GM12878 (cell line): ENCODE measurements at regions of chr3 and their contacts with region 1.

Region 1: GRCh38 chr3:152595975-152596790 is 238.7 kb upstream of the P2RY1 start:
- DNase-seq: peak; percentile 88
- ATAC-seq: peak; percentile 99
- H3K4me3 ChIP-seq: no peak overlapping the region
- H3K27ac ChIP-seq: peak overlapping the region; percentile 16
- H3K4me1 ChIP-seq: peaks cover 7% of the 10 kb centered on the region
- H3K27me3 ChIP-seq: no peaks in the 10 kb centered on the region
- CTCF ChIP-seq: no peak
- EP300 ChIP-seq: no peak; a peak in 2 of 4 replicates
- POLR2A ChIP-seq: no peak
- RAD21 ChIP-seq: no peak

Region 2: GRCh38 chr3:151816091-151816604 is 780.0 kb before region 1 on chr3:
- CTCF ChIA-PET with region 1: no interaction called
- POLR2A ChIA-PET with region 1: no interaction called
- RAD21 ChIA-PET with region 1: no interaction called
- SMC1A ChIA-PET with region 1: no interaction called
- in situ Hi-C with region 1: no loop called
- intact Hi-C with region 1: no loop called
- DNase-seq: no peak
- ATAC-seq: no peak
- H3K4me3 ChIP-seq: no peak overlapping the region
- H3K27ac ChIP-seq: no peak overlapping the region
- H3K4me1 ChIP-seq: no peaks in the 10 kb centered on the region
- H3K27me3 ChIP-seq: no peaks in the 10 kb centered on the region; a peak in 1 of 4 replicates
- CTCF ChIP-seq: no peak
- EP300 ChIP-seq: no peak
- POLR2A ChIP-seq: no peak
- RAD21 ChIP-seq: no peak

Region 3: DNA sequence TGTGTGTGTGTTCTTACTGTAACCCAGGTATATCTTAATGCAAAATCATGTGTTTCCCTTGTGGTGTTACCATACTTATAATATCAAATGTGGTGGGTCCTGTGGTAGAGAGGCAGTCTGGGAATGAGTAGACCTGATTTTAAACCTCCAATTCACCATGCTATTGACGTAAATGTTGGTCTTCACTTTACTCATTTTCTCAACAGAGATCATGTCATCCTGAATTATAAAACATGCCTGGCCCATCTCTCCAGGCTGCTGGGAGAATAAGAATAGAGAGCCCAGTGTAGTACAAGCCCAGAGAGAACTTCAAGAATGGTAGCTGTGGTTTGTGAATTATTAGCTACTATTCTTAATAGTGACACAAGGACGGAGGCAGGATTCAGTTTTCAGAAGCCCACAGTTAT is 239.3 kb before region 1 on chr3:
- CTCF ChIA-PET with region 1: no interaction called
- POLR2A ChIA-PET with region 1: no interaction called
- RAD21 ChIA-PET with region 1: no interaction called
- SMC1A ChIA-PET with region 1: no interaction called
- in situ Hi-C with region 1: no loop called
- intact Hi-C with region 1: no loop called
- DNase-seq: peak; percentile 61
- ATAC-seq: peak; percentile 89
- H3K4me3 ChIP-seq: no peak overlapping the region
- H3K27ac ChIP-seq: peak overlapping the region; percentile 48
- H3K4me1 ChIP-seq: peaks cover 14% of the 10 kb centered on the region
- H3K27me3 ChIP-seq: no peaks in the 10 kb centered on the region
- CTCF ChIP-seq: no peak
- EP300 ChIP-seq: peak; percentile 90
- POLR2A ChIP-seq: no peak
- RAD21 ChIP-seq: no peak

Region 4: DNA sequence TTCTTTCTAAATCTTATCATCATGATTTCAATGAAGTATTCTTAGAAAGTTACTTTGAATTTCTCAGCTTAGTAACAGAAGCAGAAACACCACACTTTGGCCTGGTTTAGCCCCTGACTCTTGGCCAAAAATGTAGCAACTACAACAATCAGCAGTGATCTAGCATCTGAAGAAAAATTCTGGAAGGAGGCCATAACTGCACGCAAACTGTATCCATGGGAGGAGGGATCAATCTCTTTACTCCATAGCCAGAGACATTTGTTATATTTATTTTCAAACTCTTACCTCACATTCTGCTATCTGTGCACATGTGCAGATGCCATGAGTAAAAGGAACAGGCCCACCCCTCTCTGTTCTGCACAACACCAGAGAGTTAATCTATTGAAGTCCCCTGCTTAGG is 12.2 kb before region 1 on chr3:
- CTCF ChIA-PET with region 1: interaction called, 3 read pairs
- POLR2A ChIA-PET with region 1: interaction called, 7 read pairs
- RAD21 ChIA-PET with region 1: no interaction called
- SMC1A ChIA-PET with region 1: interaction called, 14 read pairs
- in situ Hi-C with region 1: no loop called
- intact Hi-C with region 1: no loop called
- DNase-seq: no peak
- ATAC-seq: no peak
- H3K4me3 ChIP-seq: no peak overlapping the region
- H3K27ac ChIP-seq: no peak overlapping the region
- H3K4me1 ChIP-seq: no peaks in the 10 kb centered on the region
- H3K27me3 ChIP-seq: no peaks in the 10 kb centered on the region
- CTCF ChIP-seq: no peak
- EP300 ChIP-seq: no peak
- POLR2A ChIP-seq: no peak
- RAD21 ChIP-seq: no peak

Region 5: DNA sequence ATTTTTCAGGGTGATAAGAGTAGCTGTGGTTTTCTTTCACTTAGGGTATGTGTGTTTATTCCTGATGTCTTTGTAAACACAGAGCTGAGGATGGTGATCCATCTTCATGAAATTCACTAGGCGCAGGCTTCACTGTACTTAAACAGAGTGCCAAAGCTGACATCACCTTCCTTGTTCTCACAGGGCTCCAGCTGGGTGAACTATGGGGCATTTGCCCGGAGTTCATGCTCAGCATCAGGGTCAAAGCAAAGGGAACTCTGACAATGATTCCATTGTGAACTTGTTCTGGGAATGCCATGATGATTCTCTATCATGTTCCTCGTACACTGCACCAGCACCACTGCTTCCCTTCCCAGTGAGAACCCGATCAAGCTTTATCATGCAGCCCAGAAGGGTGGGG is 54.0 kb after region 1 on chr3:
- CTCF ChIA-PET with region 1: no interaction called
- POLR2A ChIA-PET with region 1: no interaction called
- RAD21 ChIA-PET with region 1: no interaction called
- SMC1A ChIA-PET with region 1: interaction called, 12 read pairs
- in situ Hi-C with region 1: no loop called
- intact Hi-C with region 1: no loop called
- DNase-seq: no peak
- ATAC-seq: no peak
- H3K4me3 ChIP-seq: no peak overlapping the region
- H3K27ac ChIP-seq: no peak overlapping the region
- H3K4me1 ChIP-seq: 0 out of 2 replicates have a peak, but pooled peaks cover 2% of the 10 kb centered on the region
- H3K27me3 ChIP-seq: no peaks in the 10 kb centered on the region
- CTCF ChIP-seq: no peak
- EP300 ChIP-seq: no peak
- POLR2A ChIP-seq: no peak
- RAD21 ChIP-seq: no peak